Motor neuron (in vitro differentiated cells): ENCODE measurements at regions of chr4 and their contacts with region 1.

Region 1: GRCh38 chr4:186037692-186038658 is 31.0 kb upstream of the TLR3 start:
- ATAC-seq: peak; percentile 52 to 88 (median 66)
- H3K4me3 ChIP-seq: no peak overlapping the region
- H3K27ac ChIP-seq: no peak overlapping the region
- H3K4me1 ChIP-seq: no peaks in the 10 kb centered on the region

Region 2: DNA sequence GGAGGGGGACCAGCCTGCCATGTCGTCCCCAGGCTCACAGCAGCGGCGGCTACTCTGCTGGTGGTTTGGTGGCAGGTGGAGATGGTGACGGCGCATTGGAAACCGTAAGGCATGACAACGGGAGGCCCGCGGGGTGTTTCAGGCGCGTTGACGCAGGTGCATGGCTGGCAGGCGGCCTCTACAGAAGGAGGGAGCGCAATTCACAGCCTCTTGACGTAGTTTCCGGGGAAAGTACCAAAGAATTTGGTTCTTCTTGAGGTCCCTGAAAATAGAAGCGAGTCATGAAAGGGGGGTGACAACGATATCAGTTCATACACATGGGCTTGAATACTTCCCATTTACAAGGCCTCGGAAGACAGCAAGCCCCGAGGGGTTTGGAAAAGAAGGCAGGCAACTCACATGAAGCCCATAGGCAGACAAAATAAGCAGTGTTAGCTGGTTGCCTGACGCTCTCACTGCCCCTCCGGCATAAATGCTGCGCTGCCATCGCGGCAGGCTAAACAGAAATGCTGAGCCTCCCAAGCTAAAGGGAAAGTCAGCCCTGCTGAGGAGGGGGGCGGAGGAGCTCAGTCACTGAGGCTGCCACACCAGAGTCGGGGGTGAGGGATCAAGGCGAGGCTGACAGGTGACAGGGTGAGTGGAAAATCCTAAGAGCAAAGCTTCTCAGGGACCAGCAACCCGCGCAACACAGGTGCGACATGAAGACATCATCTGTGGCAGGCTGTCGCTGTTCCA is 450.4 kb before region 1 on chr4:
- in situ Hi-C with region 1: no loop called
- ATAC-seq: peak in 7 of 8 experiments; percentile 12 to 83 (median 59)
- H3K4me3 ChIP-seq: no peak overlapping the region
- H3K27ac ChIP-seq: no peak overlapping the region
- H3K4me1 ChIP-seq: peaks cover 10 to 14% of the 10 kb centered on the region in 2 donors

Region 3: GRCh38 chr4:185599553-185600243 is 438.3 kb before region 1 on chr4:
- in situ Hi-C with region 1: loop called in 1 of 9 experiments (anchors 25 kb)
- ATAC-seq: peak in 3 of 8 experiments; percentile 66 to 86 (median 75)
- H3K4me3 ChIP-seq: no peak overlapping the region
- H3K27ac ChIP-seq: no peak overlapping the region
- H3K4me1 ChIP-seq: peaks cover 8 to 21% of the 10 kb centered on the region in 2 donors

Region 4: DNA sequence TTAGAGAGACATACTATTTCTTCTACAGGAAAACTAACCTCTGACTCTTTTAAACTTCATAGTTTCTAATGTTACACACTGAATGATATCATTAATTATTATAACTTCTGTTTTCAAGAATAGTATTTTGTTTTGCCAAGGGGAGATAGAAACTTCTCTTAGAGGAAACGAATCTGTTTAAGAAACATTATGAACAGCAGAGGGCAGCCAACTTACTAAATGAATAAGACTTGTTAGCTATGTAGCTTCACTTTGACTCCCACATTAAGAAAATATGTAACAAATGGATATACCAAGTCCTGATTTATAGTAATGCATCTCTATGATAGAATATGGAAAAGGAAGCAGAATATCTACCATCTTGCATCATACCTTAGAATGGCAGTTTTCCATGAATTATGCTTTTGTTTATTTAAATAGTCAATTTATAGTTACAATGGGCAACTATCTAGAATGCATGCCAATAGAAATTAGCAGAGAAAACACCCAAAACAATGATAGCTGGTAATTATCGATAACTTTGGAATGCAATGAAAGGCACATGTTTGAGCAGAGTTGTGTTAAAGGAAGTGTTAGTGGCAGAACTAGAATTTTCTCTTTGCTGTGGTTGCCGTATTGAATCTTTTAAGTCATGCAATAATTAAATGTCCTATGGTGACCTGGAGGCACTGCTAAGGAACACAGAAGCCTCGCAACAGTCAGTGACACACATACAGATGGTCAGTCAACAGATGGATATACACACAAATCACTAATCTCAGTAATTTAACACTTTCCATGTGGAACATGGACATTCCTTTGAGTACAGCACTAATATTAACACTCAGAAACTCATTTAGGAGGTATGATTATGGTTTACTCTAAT is 396.9 kb before region 1 on chr4:
- in situ Hi-C with region 1: loop called in 1 of 9 experiments (anchors 25 kb)
- ATAC-seq: peak in 6 of 8 experiments; percentile 32 to 71 (median 53)
- H3K4me3 ChIP-seq: no peak overlapping the region
- H3K27ac ChIP-seq: no peak overlapping the region
- H3K4me1 ChIP-seq: peaks cover 0 to 8% of the 10 kb centered on the region in 2 donors